HCT116 (cell line): ENCODE measurements at regions of chr1 and their contacts with region 1.

Region 1: DNA sequence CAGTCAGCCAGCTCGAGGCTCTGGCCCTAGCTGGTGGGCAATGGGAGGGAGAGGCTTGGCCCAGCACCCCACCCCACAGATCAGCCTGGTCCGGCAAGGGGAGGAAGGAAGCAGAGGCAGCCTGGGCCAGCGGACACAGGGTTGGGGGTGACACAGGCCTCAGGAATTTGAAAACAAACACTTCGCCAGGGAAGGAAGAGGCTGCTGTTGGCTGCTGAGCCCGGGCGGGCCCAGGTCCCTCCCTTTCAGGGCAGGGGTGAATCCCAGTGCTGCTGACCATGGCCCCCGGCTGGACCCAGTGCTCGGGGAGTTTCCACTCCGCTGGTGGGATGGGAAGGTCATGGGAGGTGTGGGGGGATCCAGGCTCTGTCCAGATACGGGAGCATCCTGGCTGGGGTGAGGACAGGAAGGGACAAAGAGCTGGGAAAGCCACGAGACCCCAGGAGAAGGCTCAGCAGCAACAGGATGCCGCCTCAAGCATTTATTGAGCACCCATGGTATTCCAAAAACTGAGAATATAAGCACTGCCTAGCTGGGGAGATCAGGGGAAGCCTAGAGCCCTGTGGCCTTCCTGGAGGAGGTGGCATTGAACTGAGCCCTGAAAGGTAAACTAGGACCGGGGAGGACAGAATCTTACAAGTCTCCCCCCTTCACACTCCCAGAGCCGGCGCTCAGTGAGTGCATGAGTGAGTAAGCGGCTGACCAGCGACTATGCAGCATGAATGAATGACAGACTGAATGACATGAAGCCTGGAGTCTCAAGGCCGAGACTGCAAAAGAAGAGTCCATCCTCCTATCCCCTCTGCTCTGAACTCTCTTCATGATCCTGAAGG is 26.2 kb upstream of the EPHA2 start:
- DNase-seq: peak; percentile 77
- ATAC-seq: peak; percentile 87
- H3K4me3 ChIP-seq: peak overlapping the region; percentile 19 to 49
- H3K27ac ChIP-seq: peak overlapping the region; percentile 94
- H3K4me1 ChIP-seq: peaks cover 74 to 89% of the 10 kb centered on the region in 2 experiments
- H3K27me3 ChIP-seq: no peaks in the 10 kb centered on the region
- CTCF ChIP-seq: no peak
- POLR2A ChIP-seq: no peak
- RAD21 ChIP-seq: no peak

Region 2: DNA sequence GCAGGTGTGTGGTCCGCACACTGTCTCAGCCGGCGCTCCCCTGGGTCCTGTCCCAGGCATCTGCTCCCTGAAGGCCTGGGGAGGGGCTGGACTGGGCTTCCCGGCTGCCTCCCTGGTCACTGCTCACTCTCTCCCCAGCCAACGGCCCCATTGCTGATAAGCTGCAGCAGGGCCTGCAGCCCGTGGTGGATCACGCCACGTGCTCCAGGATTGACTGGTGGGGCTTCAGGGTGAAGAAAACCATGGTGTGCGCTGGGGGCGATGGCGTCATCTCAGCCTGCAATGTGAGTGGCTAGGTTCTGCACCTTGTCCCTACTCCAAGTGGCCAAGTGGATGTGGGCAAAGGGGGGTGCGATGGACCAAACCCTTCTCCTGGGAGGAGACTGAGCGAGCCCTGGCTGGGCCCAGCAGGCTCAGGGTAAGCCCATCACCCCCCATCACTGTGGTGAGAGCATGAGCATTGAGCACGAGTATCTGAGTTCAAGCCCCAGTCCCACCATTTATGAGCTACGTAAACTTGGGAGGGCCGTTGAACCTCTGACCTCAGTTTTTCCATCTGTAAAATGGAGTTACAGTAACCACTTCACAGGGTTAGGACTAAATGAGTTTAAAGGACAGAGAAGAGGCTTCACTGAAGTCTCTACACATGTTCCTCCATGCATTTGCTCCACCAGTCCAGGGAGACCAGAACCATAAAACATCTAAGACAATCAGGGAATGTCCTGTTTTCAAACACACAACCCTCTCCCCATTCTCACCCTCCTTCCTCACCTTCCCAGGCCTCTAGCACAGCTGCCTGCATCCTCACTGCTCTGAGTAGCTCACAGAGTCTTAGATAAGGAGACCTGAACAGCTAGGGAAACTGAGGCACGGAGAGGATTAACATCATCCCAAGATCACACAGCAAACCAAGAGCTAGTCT is 737.4 kb before region 1 on chr1:
- CTCF ChIA-PET with region 1: no interaction called
- POLR2A ChIA-PET with region 1: no interaction called
- RAD21 ChIA-PET with region 1: no interaction called
- intact Hi-C with region 1: no loop called
- DNase-seq: no peak
- ATAC-seq: no peak
- H3K4me3 ChIP-seq: no peak overlapping the region
- H3K27ac ChIP-seq: no peak overlapping the region
- H3K4me1 ChIP-seq: no peaks in the 10 kb centered on the region
- H3K27me3 ChIP-seq: no peaks in the 10 kb centered on the region
- CTCF ChIP-seq: no peak
- POLR2A ChIP-seq: no peak
- RAD21 ChIP-seq: no peak

Region 3: DNA sequence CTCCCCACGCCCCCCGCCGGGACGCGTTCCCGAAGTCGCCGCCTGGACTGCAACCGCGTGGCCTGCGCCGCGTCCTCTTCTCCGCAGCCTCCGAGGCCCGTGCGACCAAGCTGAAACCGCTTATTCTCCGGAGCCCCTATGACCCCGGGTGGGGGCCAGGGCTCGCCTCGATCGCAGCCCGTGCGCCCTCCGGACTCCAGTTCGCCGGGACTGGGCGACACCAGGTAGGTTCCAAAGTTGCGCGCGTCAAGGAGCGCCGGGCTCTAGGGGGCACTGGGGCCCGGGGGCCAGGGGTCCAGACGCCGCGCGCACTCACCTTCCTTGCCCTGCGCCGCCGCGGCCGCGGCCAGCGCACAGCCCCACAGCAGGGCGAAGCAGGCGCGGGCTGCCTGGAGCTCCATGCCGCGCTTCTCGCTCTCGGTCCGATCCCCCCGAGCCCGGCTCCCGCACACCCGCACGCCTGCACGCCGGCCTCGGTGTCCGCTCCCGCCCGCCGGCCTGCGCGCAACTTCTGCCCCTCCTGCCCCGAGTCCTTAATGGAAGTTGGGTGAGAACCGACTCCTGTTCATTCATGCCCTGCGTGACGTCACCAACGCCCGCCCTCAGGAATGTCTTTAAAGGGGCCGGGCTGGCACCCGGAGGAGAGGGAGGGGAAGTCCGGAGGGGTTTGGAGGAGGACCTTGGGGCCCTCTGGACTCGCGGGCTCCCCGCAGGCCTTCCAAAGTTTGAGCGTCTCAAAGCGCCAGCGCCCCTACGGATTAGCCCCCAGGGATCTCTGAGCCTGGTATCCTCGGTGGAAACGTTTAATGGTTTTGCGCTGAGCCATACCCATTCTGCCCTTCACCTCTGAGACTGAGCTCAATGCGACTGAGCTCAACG is 26.3 kb before region 1 on chr1 and contains the start of gene EPHA2:
- CTCF ChIA-PET with region 1: interaction called, 5 read pairs
- POLR2A ChIA-PET with region 1: interaction called, 10 read pairs
- RAD21 ChIA-PET with region 1: interaction called, 3 read pairs
- intact Hi-C with region 1: no loop called
- DNase-seq: peak; percentile 87
- ATAC-seq: peak; percentile 69
- H3K4me3 ChIP-seq: peak within 1 kb of the TSS; percentile 75 to 93
- H3K27ac ChIP-seq: peak within 1 kb of the TSS; percentile 96
- H3K4me1 ChIP-seq: peaks cover 72 to 83% of the 10 kb centered on the region in 2 experiments
- H3K27me3 ChIP-seq: no peaks in the 10 kb centered on the region
- CTCF ChIP-seq: no peak
- POLR2A ChIP-seq: peak; percentile 96
- RAD21 ChIP-seq: no peak
- total RNA-seq, gene EPHA2: 164 TPM

Region 4: GRCh38 chr1:16164213-16165072 is 17.7 kb before region 1 on chr1:
- CTCF ChIA-PET with region 1: no interaction called
- POLR2A ChIA-PET with region 1: interaction called, 11 read pairs
- RAD21 ChIA-PET with region 1: interaction called in 1 of 2 experiments, 3 read pairs
- intact Hi-C with region 1: no loop called
- DNase-seq: no peak
- ATAC-seq: peak; percentile 31
- H3K4me3 ChIP-seq: peak overlapping the region in 1 of 2 experiments; percentile 25; a peak in 1 of 4 replicates
- H3K27ac ChIP-seq: peak overlapping the region; percentile 27
- H3K4me1 ChIP-seq: peaks cover 67 to 94% of the 10 kb centered on the region in 2 experiments
- H3K27me3 ChIP-seq: no peaks in the 10 kb centered on the region
- CTCF ChIP-seq: no peak
- POLR2A ChIP-seq: no peak
- RAD21 ChIP-seq: no peak

Region 5: DNA sequence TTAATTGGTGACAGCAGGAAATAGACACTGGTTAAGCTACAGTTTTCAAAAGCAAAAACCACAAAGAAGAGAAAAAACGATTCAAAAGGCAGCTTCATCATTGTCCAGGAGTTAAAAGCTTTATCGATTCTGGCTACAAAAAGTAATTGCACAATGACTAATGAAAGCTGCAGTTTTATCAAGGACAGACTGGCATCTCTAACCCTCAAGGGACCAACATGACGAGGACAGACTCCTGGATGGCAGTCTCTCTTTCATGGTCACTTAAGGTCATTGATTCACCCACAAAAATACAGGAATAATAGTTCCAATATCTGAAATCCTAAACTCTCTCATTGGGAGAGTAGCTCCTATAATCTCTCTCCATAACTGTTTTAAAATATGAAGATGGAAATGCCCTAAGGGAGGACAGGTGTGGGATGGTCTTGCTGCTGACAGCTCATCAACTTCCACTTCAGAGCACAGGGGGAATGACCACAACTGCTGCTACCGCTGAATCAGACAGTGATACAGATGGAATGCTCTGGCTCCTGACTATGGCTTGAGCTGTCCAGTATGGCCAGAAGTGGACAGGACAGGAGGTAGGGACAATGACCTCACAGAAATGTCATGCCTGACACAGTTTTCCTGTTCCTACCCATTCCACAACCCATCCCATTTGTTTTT is 72.3 kb after region 1 on chr1:
- CTCF ChIA-PET with region 1: no interaction called
- POLR2A ChIA-PET with region 1: no interaction called
- RAD21 ChIA-PET with region 1: no interaction called
- intact Hi-C with region 1: no loop called
- DNase-seq: no peak
- ATAC-seq: no peak
- H3K4me3 ChIP-seq: no peak overlapping the region
- H3K27ac ChIP-seq: no peak overlapping the region
- H3K4me1 ChIP-seq: peaks cover 0 to 8% of the 10 kb centered on the region in 2 experiments; a peak in 2 of 4 replicates
- H3K27me3 ChIP-seq: no peaks in the 10 kb centered on the region
- CTCF ChIP-seq: no peak
- POLR2A ChIP-seq: no peak
- RAD21 ChIP-seq: no peak